OCI-LY7 (cell line): ENCODE measurements at regions of chr14 and their contacts with region 1.

Region 1: DNA sequence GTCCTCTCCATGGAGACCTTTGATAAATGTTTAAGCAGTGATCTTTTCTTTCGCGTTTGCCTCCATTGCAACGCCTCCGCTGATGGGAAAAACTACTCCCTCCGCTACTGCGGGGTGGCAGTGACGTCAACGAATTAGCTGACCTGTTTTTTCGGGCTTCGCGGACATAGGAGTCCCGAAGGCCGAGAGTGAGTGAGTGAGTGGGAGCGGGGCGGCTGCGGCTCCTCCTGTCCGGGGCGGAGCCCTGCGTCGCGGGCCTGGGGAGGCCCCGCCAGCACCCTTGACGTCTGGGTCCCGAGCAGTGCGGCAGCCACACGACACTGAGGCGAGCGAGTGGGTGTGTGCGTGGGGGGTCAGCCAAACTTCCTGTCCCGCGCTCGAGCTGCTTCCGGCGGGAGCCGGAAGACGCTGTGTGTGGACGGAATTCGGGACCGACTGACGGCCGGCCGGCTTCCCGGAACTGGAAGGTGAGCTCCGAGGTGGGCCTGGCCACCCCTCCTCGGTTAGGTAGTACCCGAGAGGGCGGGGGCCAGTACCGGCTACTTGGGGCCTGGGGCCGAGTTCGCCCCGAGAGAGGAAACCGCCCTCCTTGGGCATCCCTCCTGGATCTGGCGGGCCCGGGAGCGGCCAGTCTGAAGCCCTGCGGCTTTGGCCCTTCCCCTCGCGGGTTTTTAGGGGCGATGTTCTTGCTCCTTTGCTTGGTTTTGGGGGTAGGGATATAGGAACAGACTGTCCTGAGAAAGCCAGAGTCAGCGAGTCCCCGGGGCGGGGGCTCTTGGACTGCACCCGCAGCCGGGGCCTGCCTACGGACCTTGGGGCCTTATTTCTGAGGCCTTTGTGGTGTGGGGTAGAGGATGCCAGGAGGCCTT is at the start of gene ZNF410:
- DNase-seq: peak; percentile 88
- H3K4me3 ChIP-seq: peak within 1 kb of the TSS; percentile 98
- H3K27ac ChIP-seq: peak within 1 kb of the TSS; percentile 68
- H3K4me1 ChIP-seq: peaks cover 32% of the 10 kb centered on the region
- CTCF ChIP-seq: no peak
- total RNA-seq, gene ZNF410: 41.6 and 49.6 TPM in 2 replicates

Region 2: DNA sequence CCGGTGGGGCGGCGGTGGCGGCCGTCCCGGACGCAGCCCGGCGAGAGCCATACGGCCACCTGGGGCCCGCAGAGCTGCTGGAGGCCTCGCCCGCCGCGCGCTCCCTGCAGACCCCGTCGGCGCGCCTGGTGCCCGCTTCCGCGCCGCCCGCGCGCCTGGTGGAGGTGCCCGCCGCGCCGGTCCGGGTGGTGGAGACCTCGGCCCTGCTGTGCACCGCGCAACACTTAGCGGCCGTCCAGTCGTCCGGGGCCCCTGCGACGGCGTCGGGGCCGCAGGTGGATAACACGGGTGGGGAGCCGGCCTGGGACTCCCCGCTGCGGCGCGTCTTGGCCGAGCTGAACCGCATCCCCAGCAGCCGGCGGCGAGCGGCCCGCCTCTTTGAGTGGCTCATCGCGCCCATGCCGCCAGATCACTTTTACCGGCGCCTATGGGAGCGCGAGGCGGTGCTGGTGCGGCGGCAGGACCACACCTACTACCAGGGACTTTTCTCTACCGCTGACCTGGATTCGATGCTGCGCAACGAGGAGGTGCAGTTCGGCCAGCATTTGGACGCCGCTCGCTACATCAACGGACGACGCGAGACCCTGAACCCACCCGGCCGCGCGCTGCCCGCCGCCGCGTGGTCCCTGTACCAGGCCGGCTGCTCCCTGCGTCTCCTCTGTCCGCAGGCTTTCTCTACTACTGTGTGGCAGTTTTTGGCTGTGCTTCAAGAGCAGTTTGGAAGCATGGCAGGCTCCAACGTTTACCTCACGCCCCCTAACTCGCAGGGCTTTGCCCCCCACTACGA is 395.2 kb before region 1 on chr14:
- CTCF ChIA-PET with region 1: no interaction called
- POLR2A ChIA-PET with region 1: no interaction called
- intact Hi-C with region 1: loop called (anchors 5 kb)
- DNase-seq: peak; percentile 59
- H3K4me3 ChIP-seq: peak overlapping the region; percentile 84
- H3K27ac ChIP-seq: peak overlapping the region; percentile 32
- H3K4me1 ChIP-seq: peaks cover 35% of the 10 kb centered on the region
- CTCF ChIP-seq: no peak

Region 3: DNA sequence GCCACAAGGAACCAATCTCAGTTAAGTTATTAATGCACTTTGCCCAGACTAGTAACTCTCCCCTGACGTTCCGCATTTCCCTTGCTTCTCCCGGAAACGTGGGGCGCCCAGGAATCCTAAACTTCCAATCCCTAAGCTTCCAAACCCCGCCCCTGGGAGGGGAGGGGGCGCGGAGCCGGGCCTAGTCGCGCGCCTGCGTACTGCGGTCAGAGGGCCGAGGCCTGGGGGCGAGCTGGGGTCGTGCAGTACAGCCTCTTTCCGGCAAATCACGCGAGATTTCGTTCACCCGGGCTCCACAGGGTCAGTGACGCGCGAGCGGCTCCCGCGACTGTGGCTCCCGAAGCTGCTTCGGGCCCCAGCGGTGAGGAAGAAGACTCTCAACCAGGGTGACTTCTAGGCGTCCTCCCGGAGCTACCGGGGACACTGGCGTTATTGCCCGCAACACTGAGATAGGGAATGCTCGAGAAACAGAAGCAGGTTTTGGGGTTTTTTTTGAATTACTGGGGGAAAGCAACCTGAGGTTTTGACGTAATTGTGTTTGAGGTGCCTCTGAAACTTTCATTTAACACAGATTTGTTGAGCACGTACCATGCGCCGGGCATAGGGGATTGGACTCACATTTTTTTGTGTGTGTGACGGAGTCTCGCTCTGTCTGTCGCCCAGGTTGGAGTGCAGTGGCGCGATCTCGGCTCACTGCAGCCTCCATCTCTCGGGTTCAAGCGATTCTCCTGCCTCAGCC is 34.9 kb before region 1 on chr14 and contains the start of gene PTGR2:
- CTCF ChIA-PET with region 1: no interaction called
- POLR2A ChIA-PET with region 1: interaction called, 6 read pairs
- intact Hi-C with region 1: loop called (anchors 1 kb)
- DNase-seq: peak; percentile 96
- H3K4me3 ChIP-seq: peak within 1 kb of the TSS; percentile 73
- H3K27ac ChIP-seq: peak within 1 kb of the TSS; percentile 64
- H3K4me1 ChIP-seq: peaks cover 17% of the 10 kb centered on the region
- CTCF ChIP-seq: no peak
- total RNA-seq, gene PTGR2: 6.4 and 6.6 TPM in 2 replicates